Activated CD8-positive, alpha-beta T cell treated with anti-CD3 and anti-CD28 coated beads for 36 hours (primary cell): ENCODE measurements at regions of chr2 and their contacts with region 1.

Region 1: DNA sequence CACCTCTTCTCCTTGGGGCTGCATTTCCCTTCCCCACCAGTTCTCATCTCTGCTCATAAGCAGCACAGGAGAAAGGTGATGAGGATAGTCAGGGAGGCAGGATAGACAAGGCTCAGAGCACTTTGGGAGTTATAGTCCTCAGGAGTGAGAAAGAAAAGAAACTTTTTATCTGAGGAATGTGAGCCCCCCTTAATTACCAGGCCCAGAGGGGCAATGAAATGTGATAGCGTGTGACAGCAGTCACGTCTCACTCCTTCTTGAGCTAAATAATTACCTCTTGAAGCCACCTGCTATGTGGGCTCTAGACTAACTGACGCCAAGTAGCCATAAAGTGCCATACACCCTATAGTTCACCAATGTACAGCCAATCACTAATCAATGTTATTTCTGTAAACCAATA is 105.8 kb downstream of the SPP2 start:
- DNase-seq: no peak
- ATAC-seq: no peak
- H3K4me3 Mint-ChIP-seq: no peak overlapping the region
- H3K27ac Mint-ChIP-seq: no peak overlapping the region
- H3K4me1 Mint-ChIP-seq: no peaks in the 10 kb centered on the region
- H3K27me3 Mint-ChIP-seq: no peaks in the 10 kb centered on the region
- CTCF ChIP-seq: no peak

Region 2: DNA sequence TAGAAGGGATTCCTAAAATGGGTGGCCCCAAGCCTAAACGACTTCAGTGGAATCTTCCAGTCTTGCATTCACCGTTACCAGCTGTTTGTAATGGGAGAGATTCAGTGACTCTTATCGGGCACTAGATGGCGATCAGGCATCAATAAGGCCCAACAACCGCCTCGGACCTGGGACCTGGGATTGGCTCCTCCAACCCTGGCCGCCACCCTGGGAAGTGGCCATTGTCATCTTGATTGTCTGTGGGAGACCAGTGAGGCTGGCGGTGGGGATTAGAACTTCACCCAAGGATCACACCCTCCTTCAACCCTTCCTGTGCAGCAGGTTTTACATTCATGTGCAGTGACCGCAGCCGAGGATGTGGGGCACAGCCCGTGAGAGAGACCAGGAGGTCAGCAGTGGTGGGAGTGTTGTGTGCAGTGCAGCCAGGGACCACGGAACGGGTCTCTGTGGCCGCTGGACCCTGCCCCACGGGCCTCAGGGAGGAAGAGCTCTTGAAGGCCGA is 20.6 kb before region 1 on chr2:
- CTCF ChIA-PET with region 1: interaction called, 13 read pairs
- POLR2A ChIA-PET with region 1: no interaction called
- intact Hi-C with region 1: no loop called
- DNase-seq: peak; percentile 66
- ATAC-seq: peak; percentile 83
- H3K4me3 Mint-ChIP-seq: no peak overlapping the region
- H3K27ac Mint-ChIP-seq: no peak overlapping the region
- H3K4me1 Mint-ChIP-seq: peaks cover 17% of the 10 kb centered on the region
- H3K27me3 Mint-ChIP-seq: no peaks in the 10 kb centered on the region
- CTCF ChIP-seq: peak; percentile 90

Region 3: DNA sequence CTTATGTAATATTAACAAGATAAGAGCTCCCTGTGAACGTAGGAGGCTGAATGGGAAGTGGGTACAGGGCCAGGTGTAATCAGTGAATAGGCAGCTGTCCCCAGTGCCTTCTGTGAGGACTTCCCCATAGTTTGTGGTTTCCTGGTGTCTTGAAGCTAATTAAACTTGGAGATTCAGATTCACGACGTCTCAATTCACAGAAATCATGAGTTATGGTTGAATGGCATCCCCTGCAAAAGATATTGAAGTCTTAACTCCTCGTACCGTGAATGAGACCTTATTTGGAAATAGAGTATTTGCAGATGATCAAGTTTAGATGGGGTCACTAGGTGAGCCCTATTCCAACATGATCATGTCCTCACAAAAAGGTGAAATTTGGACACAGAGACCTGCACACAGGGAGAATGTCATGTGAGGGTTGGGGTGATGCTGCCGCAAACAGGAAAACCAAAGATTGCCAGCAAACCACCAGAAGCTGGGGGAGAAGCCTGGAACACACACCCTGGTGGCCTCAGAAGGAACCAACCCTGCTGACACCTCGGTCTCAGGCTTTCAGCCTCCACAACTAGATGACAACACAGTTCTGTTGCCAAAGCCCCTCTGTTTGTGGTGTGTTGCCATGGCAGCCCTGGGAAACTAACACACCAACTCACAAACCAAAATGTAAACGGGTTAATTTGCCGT is 327.4 kb after region 1 on chr2:
- CTCF ChIA-PET with region 1: no interaction called
- POLR2A ChIA-PET with region 1: no interaction called
- intact Hi-C with region 1: no loop called
- DNase-seq: peak; percentile 95
- ATAC-seq: peak; percentile 85
- H3K4me3 Mint-ChIP-seq: peak overlapping the region; percentile 47
- H3K27ac Mint-ChIP-seq: peak overlapping the region; percentile 93
- H3K4me1 Mint-ChIP-seq: peaks cover 75% of the 10 kb centered on the region
- H3K27me3 Mint-ChIP-seq: no peaks in the 10 kb centered on the region
- CTCF ChIP-seq: peak; percentile 68